ENCODE measurements at regions of chr3 and their contacts with region 1.

Region 1: DNA sequence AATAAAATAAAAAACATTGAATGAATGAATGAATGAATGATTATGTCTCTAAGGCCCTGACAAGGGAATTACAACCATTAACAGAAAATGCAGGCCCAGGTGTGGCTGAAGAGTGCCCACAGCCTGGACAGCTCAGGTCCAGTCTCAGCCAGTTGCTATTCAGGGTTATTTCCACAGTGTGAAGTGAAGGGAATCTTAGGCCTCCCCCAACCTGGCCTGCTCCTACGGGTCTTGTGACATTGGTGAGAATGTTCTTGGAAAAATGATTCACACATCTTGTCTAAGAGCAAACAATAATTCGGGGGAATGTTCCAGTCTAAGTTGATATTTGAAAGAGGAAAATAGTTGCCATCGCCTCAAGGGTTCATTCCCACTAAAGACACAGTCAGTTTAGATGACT is 37.0 kb downstream of the MINDY4B start:
- DNase-seq: no peak
- ATAC-seq: peak; percentile 58
- H3K4me3 ChIP-seq: no peak overlapping the region
- H3K27ac ChIP-seq: no peak overlapping the region
- H3K4me1 ChIP-seq: no peaks in the 10 kb centered on the region
- H3K27me3 ChIP-seq: no peaks in the 10 kb centered on the region
- CTCF ChIP-seq: no peak

Region 2: DNA sequence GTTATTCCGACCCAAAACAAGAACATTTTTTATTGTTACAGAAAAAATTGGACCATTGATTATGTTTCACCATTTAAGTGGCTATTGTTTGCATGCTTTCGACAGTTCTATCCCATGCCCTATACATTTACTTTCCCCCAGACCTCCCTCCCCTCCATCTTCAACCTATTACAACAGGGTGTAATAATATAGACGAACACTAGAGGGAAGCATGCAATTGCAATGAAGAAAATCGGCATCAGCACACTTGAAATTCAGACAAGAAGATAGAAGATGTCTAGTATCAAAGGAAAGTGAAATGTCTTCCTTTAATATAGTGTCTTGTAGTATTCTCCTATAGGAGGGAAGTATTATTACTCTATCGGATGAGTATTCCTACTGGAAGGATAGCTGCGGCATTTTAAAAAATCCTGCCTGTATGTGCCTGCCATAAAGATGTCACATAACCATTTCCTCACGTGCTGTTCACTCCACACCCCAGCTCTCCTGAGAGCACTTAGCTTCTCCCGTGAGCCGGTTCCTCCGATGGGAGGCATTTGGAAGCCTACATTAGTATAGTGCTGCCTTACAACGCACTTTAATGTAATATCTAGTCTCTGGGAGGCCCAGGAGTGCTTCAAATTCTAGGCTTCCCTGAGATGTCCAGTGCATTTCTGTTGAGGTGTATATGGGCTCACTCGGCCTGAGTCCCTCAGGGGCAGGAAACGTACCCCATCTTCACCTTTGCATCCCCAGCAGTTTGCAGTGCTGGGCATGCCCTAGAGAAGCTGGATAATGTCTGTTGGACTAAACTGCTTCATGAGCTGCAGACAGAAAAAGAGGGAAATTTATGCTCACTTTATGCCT is 146.8 kb before region 1 on chr3:
- intact Hi-C with region 1: loop called (anchors 10 kb)
- DNase-seq: no peak
- ATAC-seq: peak; percentile 87
- H3K4me3 ChIP-seq: no peak overlapping the region
- H3K27ac ChIP-seq: no peak overlapping the region
- H3K4me1 ChIP-seq: peaks cover 5% of the 10 kb centered on the region
- H3K27me3 ChIP-seq: no peaks in the 10 kb centered on the region
- CTCF ChIP-seq: peak; percentile 85

Region 3: DNA sequence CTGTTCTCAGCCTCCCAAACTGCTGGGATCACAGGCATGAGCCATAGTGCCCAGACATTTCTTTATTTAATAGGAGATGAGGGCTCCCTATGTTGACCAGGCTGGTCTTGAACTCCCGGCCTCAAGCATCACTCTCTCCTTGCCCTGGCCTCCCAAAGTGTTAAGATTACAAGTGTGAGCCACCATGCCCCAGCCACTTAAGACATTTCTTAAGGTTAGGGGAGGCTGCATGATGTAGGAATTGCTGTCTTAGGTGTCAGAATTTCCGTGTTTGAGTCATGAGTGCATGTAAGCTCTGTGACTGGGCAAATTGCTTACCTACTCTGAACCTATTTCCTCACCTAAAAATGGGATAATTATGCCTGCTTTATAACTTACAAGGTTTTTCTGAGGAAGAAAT is 71.2 kb before region 1 on chr3:
- intact Hi-C with region 1: no loop called
- DNase-seq: no peak
- ATAC-seq: no peak
- H3K4me3 ChIP-seq: no peak overlapping the region
- H3K27ac ChIP-seq: no peak overlapping the region
- H3K4me1 ChIP-seq: no peaks in the 10 kb centered on the region
- H3K27me3 ChIP-seq: peaks cover 5% of the 10 kb centered on the region
- CTCF ChIP-seq: no peak